Right ventricle myocardium inferior (tissue), 1 donor: ENCODE measurements at regions of chr12 and their contacts with region 1.

Region 1: DNA sequence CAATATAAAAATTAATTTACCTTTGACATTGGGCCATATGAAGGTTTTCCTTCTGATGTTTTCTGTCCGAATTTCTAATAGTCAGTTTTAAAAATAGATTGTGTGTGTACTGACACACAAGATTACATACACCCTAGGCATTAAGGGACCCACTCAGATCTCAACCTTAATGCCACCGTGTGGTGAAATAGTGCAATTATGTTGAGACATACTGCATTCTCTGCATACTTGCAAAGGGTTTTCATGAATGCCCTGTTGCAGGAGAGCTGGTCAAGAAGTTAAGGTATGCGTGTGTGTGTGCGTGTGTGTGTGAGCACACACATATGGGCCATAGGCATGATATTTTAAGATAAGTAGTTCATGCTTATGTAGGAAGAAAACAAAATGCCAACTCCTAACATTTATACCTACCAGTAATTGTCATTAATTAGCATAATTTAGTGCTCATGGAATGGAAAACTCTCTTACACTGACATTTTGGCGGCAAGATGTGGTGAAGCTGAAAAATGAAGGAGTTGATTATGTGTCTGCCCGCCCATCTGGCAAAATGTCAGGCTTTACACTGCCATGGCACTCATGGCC is 58.8 kb downstream of the PIK3C2G start:
- DNase-seq: no peak
- ATAC-seq: peak; percentile 60

Region 2: GRCh38 chr12:18250313-18250916 is 69.7 kb before region 1 on chr12:
- intact Hi-C with region 1: loop called (anchors 5 kb)
- DNase-seq: no peak
- ATAC-seq: no peak

Region 3: GRCh38 chr12:18261253-18261652 is 58.9 kb before region 1 on chr12 and contains the start of gene PIK3C2G:
- intact Hi-C with region 1: no loop called
- DNase-seq: no peak
- ATAC-seq: no peak
- total RNA-seq, gene PIK3C2G: not detected

Region 4: GRCh38 chr12:18283831-18284230 is 36.3 kb before region 1 on chr12:
- intact Hi-C with region 1: no loop called
- DNase-seq: no peak
- ATAC-seq: peak; percentile 62